ENCODE measurements at regions of chr11 and their contacts with region 1.

Region 1: GRCh38 chr11:90310210-90310609 is 87.4 kb upstream of the CHORDC1 start:
- DNase-seq: no peak
- H3K4me3 ChIP-seq: no peak overlapping the region
- H3K27ac ChIP-seq: no peak overlapping the region
- H3K4me1 ChIP-seq: no peaks in the 10 kb centered on the region
- H3K27me3 ChIP-seq: peaks cover 2% of the 10 kb centered on the region
- CTCF ChIP-seq: no peak

Region 2: DNA sequence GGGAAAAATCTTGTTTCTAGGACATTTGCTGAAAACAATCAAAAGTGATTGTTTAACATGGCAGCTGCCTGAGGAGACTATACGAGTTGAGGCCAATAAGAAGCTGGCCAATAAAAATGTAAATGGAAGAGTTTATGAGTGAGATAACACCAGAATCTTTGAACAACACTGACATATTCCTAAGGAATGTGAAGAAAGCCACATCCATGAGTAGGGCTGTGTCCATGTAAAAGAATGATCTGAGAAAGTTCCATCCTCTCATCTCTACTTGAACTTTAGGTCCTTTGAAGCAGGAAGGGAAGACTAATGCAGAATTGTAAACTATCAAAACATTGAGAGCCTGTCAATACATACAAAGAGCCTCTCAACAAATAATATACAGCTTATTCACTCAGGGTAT is 80.4 kb before region 1 on chr11:
- CTCF ChIA-PET with region 1: no interaction called
- dilution Hi-C with region 1: no loop called
- in situ Hi-C with region 1: no loop called
- intact Hi-C with region 1: no loop called
- DNase-seq: peak; percentile 27
- H3K4me3 ChIP-seq: no peak overlapping the region
- H3K27ac ChIP-seq: no peak overlapping the region
- H3K4me1 ChIP-seq: no peaks in the 10 kb centered on the region
- H3K27me3 ChIP-seq: no peaks in the 10 kb centered on the region
- CTCF ChIP-seq: no peak

Region 3: GRCh38 chr11:90434858-90435257 is 124.6 kb after region 1 on chr11:
- CTCF ChIA-PET with region 1: no interaction called
- dilution Hi-C with region 1: no loop called
- in situ Hi-C with region 1: loop called in 1 of 2 experiments (anchors 25 kb)
- intact Hi-C with region 1: no loop called
- DNase-seq: peak; percentile 16
- H3K4me3 ChIP-seq: no peak overlapping the region
- H3K27ac ChIP-seq: no peak overlapping the region
- H3K4me1 ChIP-seq: no peaks in the 10 kb centered on the region
- H3K27me3 ChIP-seq: peaks cover 4% of the 10 kb centered on the region
- CTCF ChIP-seq: peak; percentile 34 to 49